ENCODE measurements at regions of chr12 and their contacts with region 1.

Region 1: DNA sequence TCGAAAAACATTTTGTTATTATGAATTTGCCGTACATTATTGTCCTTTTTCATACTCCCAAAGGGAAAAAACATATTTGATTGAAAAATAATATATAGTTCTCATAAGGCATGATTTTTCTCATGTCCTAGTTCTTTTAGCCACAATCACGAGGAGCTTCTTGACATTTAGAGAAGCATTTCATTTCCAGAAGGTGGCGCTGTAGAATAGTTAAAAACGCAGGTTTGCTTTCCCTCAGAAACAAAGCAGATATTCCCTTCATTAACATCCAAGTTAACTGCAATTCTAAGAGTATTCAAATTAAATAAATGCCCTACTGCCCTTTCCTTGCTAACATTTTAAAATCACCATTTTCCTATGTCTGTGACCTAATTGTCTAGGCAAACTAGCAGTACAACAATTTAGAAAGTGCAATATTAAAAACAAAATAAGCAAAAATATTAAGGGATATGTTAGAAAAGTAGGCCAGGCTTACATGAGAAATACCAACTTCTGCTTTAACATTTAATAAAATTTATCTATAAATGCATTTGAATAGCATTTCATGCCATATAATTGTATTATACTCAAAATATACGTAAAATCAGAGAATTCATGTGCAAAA is 10.9 kb upstream of the PIK3C2G start:
- DNase-seq: peak in 5 of 7 donors; percentile 22 to 52 (median 38)
- H3K4me3 ChIP-seq: no peak overlapping the region
- H3K27ac ChIP-seq: no peak overlapping the region
- H3K4me1 ChIP-seq: no peaks in the 10 kb centered on the region
- H3K27me3 ChIP-seq: no peaks in the 10 kb centered on the region
- CTCF ChIP-seq: peak; percentile 56 to 80 (median 71)
- POLR2A ChIP-seq: no peak

Region 2: DNA sequence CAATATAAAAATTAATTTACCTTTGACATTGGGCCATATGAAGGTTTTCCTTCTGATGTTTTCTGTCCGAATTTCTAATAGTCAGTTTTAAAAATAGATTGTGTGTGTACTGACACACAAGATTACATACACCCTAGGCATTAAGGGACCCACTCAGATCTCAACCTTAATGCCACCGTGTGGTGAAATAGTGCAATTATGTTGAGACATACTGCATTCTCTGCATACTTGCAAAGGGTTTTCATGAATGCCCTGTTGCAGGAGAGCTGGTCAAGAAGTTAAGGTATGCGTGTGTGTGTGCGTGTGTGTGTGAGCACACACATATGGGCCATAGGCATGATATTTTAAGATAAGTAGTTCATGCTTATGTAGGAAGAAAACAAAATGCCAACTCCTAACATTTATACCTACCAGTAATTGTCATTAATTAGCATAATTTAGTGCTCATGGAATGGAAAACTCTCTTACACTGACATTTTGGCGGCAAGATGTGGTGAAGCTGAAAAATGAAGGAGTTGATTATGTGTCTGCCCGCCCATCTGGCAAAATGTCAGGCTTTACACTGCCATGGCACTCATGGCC is 69.7 kb after region 1 on chr12:
- intact Hi-C with region 1: loop called (anchors 5 kb)
- DNase-seq: peak in 4 of 7 donors; percentile 14 to 41 (median 30)
- H3K4me3 ChIP-seq: no peak overlapping the region
- H3K27ac ChIP-seq: no peak overlapping the region
- H3K4me1 ChIP-seq: no peaks in the 10 kb centered on the region
- H3K27me3 ChIP-seq: no peaks in the 10 kb centered on the region
- CTCF ChIP-seq: peak; percentile 30 to 68 (median 59)
- POLR2A ChIP-seq: no peak

Measured in adrenal gland (tissue), 19 donors.